ENCODE measurements at regions of chr15 and their contacts with region 1.

Region 1: DNA sequence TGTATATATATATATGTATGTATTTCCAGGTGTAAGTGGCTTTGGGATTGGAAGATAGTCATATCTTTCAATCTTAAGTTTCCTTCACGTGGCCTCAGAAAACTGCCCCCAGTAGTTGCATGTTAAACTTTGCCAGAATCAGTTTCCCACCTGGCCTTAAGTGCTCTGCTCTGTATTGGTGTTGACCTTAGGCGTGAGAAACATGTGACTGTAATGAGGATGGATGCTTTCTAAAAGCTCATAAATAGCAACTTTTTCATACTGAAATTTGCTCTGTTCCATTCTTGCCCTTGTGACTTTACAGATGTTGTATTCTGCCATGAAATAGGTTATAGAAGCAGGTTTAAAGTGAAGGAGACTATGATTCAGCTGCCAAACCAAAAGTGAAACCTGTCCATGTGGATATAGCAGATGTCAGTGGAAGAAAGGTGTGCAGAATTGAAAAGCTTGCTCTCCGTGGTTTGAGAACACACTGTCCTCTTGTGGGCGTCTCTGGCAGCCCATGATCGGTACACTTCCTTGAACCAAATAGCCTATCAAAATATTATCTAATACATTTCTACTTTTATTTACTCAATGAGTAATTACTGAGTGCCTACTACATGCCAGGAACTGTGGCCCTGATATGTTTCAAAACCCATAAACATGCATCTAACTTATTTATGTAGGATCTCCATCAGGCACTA is 15.8 kb downstream of the SCG5 start:
- DNase-seq: peak; percentile 42
- H3K27ac ChIP-seq: no peak overlapping the region
- CTCF ChIP-seq: peak; percentile 29

Region 2: GRCh38 chr15:32994810-32995424 is 337.6 kb after region 1 on chr15:
- CTCF ChIA-PET with region 1: interaction called, 31 read pairs
- POLR2A ChIA-PET with region 1: no interaction called
- DNase-seq: peak; percentile 38
- H3K27ac ChIP-seq: no peak overlapping the region
- CTCF ChIP-seq: peak; percentile 79